SK-N-SH (cell line): ENCODE measurements at regions of chr1 and their contacts with region 1.

Region 1: DNA sequence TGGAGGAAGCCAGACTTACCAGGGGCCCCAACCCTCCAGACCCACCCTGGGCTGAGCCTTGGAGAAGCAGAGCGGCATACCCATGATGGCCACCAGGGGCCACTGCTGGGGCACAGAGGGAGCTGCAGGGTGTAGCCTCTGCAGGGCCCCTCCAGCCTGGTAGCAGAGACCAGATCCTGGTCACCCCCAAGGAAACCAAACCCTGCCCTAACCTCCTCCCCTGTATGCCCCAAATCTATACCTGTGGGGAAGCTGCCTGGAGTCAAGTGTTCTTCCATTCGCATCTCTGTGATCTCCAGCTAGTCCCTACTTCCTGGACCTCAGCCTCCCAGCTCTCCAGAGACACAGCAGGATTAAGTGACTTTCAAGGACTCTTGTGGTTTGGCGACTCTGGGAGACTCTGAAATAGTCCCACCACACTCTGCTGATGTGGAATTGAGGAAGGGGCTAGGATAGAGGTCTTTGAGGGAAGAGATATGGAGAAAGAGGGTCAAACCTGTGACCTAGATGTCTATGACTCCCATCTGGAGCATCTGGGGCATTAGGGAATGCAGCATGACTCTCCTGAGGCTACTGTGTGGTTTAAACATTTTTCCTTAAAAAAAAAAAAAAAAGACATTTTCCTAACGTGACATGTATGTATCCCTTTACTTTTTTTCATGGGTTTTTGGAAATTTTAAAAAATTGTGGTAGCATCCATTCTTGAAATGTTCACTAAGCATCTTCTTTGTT is 119.2 kb upstream of the IPO9 start:
- DNase-seq: peak; percentile 87
- H3K4me3 ChIP-seq: no peak overlapping the region
- H3K27ac ChIP-seq: peak overlapping the region; percentile 62 to 98; a peak in 3 of 4 replicates
- H3K4me1 ChIP-seq: peaks cover 19 to 71% of the 10 kb centered on the region in 2 experiments; a peak in 3 of 4 replicates
- H3K27me3 ChIP-seq: no peaks in the 10 kb centered on the region
- CTCF ChIP-seq: peak; percentile 86
- EP300 ChIP-seq: no peak
- RAD21 ChIP-seq: peak; percentile 86

Region 2: GRCh38 chr1:201468844-201469511 is 240.8 kb before region 1 on chr1 and contains the start of gene PHLDA3:
- CTCF ChIA-PET with region 1: no interaction called
- POLR2A ChIA-PET with region 1: no interaction called
- DNase-seq: peak; percentile 93
- H3K4me3 ChIP-seq: peak within 1 kb of the TSS; percentile 77 to 82
- H3K27ac ChIP-seq: peak within 1 kb of the TSS; percentile 83 to 94
- H3K4me1 ChIP-seq: peaks cover 13 to 29% of the 10 kb centered on the region in 2 experiments; a peak in 3 of 4 replicates
- H3K27me3 ChIP-seq: no peaks in the 10 kb centered on the region
- CTCF ChIP-seq: no peak
- EP300 ChIP-seq: no peak
- RAD21 ChIP-seq: no peak
- polyA plus RNA-seq, gene PHLDA3: 105 and 108 TPM in 2 replicates

Region 3: DNA sequence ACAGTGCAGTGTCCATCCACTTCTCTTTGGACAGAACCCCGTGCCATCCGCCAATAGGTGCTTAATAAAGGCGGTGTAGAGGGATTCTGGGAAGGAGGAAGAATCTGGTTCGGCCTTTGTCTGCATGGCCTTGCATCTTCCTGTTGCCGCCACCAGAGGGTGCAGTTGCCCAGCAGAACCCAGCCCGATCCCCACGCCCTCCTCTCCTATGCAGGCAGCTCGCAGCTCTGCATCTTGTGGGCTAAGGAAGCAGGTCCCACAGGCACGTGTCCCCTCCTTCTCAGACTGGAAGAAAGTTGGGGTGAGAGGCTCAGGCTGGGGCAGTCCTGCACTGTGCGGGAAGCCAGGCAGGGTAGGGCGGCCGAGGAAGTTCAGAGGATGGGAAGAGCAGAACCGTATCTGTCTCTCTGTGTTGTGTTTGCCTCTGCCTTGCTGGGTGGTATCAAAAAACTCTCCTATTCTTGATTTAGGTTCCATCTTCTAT is 150.0 kb before region 1 on chr1:
- CTCF ChIA-PET with region 1: interaction called, 397 read pairs
- POLR2A ChIA-PET with region 1: no interaction called
- DNase-seq: peak; percentile 85
- H3K4me3 ChIP-seq: no peak overlapping the region; a peak in 1 of 4 replicates
- H3K27ac ChIP-seq: peak overlapping the region; percentile 51 to 95
- H3K4me1 ChIP-seq: peaks cover 60 to 71% of the 10 kb centered on the region in 2 experiments
- H3K27me3 ChIP-seq: no peaks in the 10 kb centered on the region
- CTCF ChIP-seq: peak; percentile 91
- EP300 ChIP-seq: no peak
- RAD21 ChIP-seq: peak; percentile 99

Region 4: DNA sequence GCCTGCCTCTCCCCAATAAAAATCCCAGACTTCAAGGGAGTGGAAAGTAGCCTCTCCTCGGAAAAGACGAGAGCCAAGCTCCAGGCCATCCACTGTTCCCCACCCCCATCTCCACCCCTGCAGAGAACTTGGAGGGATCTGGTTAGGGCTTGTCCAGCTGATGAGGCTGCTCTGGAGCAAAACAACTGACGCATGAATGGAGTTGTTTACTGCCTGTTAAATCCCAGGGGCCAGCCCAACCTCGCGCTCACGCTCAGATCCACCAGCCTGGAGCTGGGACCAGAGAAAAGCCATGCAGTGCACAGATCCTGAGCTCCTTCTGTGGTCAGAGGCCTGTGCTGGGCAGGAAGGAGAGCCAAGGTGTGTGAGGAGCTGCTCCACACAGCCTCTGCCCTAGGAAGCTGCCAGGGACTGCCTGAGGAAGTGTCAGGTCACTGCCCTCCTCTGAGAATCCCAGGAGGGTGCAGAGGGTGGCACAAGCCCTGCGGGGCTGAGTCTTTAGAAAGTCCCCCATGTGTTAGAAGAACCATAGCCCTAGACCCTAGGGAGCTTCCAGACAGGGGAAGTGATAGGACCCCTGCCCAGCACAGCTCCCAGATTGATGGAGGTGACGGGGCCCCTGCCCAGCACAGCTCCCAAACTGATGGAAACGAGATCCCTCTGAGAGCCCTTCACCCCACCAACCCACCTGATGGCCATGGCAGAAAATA is 10.2 kb after region 1 on chr1:
- CTCF ChIA-PET with region 1: interaction called, 47 read pairs
- POLR2A ChIA-PET with region 1: no interaction called
- DNase-seq: no peak
- H3K4me3 ChIP-seq: no peak overlapping the region
- H3K27ac ChIP-seq: peak overlapping the region in 1 of 2 experiments; percentile 90; a peak in 2 of 4 replicates
- H3K4me1 ChIP-seq: peaks cover 20 to 63% of the 10 kb centered on the region in 2 experiments
- H3K27me3 ChIP-seq: no peaks in the 10 kb centered on the region
- CTCF ChIP-seq: no peak
- EP300 ChIP-seq: no peak
- RAD21 ChIP-seq: no peak

Region 5: GRCh38 chr1:201759194-201759815 is 49.6 kb after region 1 on chr1:
- CTCF ChIA-PET with region 1: interaction called, 25 read pairs
- POLR2A ChIA-PET with region 1: no interaction called
- DNase-seq: no peak
- H3K4me3 ChIP-seq: no peak overlapping the region
- H3K27ac ChIP-seq: peak overlapping the region; percentile 53 to 98
- H3K4me1 ChIP-seq: peaks cover 30 to 85% of the 10 kb centered on the region in 2 experiments
- H3K27me3 ChIP-seq: no peaks in the 10 kb centered on the region
- CTCF ChIP-seq: no peak
- EP300 ChIP-seq: no peak
- RAD21 ChIP-seq: no peak

Region 6: DNA sequence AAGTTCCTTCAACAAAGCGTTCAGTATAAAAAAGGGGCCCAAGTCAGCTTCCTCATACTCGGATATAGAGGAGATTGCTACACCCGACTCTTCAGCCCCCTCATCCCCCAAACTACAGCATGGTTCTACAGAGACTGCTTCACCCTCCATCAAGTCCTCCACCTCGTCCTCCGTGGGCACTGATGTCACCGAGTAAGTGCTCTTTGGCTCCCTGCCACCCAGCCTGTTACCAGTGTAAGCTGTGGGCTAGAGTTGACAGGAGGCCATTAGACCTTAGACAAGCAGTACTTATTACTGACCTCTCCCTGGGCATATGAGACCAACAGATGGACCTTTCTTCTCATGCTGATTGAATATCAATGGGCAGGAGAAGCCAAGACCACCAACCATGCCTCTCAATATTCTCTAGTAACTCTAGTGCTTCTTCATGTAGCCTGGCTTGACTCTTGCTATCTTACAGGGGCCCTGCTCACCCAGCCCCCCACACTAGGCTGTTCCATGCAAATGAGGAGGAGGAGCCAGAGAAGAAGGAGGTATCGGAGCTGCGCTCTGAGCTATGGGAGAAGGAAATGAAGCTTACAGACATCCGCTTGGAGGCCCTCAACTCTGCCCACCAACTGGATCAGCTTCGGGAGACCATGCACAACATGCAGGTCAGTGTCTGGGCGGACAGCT is 98.4 kb after region 1 on chr1:
- CTCF ChIA-PET with region 1: interaction called, 11 read pairs
- POLR2A ChIA-PET with region 1: no interaction called
- DNase-seq: no peak
- H3K4me3 ChIP-seq: no peak overlapping the region
- H3K27ac ChIP-seq: no peak overlapping the region
- H3K4me1 ChIP-seq: no peaks in the 10 kb centered on the region
- H3K27me3 ChIP-seq: no peaks in the 10 kb centered on the region
- CTCF ChIP-seq: no peak
- EP300 ChIP-seq: no peak
- RAD21 ChIP-seq: no peak